AG04449 (cell line): ENCODE measurements at regions of chr10 and their contacts with region 1.

Region 1: DNA sequence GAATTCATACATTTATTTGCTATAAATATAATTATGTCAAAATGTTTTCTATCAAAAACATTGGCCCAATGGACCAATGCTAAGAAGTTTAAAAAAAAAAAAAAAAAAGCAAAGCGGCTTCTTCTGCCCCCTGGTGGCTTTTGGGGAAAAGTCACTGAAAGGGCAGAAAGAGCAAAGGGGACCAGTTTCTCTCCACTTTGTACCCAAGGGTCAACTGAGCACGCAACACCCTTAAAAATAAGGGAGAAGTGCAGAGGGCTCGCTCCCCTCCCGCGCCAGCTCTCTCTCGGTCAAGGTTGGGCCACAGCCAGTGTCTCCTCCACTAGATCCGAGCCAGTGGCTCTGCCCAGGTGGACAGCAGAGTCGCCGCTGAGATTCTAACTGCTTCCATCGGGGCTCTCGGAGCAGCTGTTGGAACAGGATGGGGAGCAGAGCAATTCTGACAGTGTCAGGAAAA is 136.4 kb upstream of the FGFR2 start:
- DNase-seq: no peak
- H3K4me3 ChIP-seq: no peak overlapping the region
- CTCF ChIP-seq: peak; percentile 47

Region 2: GRCh38 chr10:121722665-121723064 is 12.0 kb before region 1 on chr10:
- CTCF ChIA-PET with region 1: interaction called, 20 read pairs
- POLR2A ChIA-PET with region 1: no interaction called
- DNase-seq: no peak
- H3K4me3 ChIP-seq: no peak overlapping the region
- CTCF ChIP-seq: no peak

Region 3: DNA sequence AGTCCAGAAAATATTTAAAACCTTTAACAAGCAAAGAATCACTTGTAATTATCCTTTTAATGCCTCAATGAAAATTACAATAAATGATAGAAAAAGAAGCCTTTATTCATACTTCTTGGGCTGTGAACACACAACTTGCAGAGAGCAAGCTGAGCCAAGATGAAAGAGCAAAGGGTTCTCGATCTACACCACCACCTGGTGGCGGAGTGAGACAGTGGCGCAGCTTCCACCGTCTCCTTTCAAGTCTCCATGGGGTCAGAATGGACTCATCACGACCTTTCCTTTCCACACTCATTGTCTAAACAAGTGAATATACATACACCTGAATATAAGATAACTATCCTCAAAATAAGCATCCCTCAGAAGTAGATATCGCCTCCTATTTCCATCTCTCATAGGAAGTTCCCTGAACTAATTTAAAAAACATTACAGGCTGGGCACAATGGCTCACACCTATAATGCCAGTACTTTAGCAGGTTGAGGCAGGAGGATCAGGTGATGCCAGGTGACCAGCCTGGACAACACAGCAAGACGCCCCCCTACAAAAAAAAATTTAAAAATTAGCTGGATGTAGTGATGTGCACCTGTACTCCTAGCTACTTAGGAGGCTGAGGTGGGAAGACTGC is 152.5 kb after region 1 on chr10:
- CTCF ChIA-PET with region 1: interaction called, 10 read pairs
- POLR2A ChIA-PET with region 1: no interaction called
- DNase-seq: peak; percentile 24
- H3K4me3 ChIP-seq: no peak overlapping the region
- CTCF ChIP-seq: peak; percentile 88